Mammary epithelial cell (primary cell): ENCODE measurements at regions of chr19 and their contacts with region 1.

Region 1: GRCh38 chr19:48398375-48399235 is 5.1 kb downstream of the GRIN2D start:
- DNase-seq: peak; percentile 42
- H3K4me3 ChIP-seq: peak overlapping the region; percentile 17 to 56 (median 54)
- H3K27ac ChIP-seq: no peak overlapping the region
- H3K4me1 ChIP-seq: peaks cover 19% of the 10 kb centered on the region
- H3K27me3 ChIP-seq: peaks cover 10% of the 10 kb centered on the region
- CTCF ChIP-seq: no peak

Region 2: GRCh38 chr19:48255376-48256303 is 143.0 kb before region 1 on chr19 and contains the start of gene CARD8:
- CTCF ChIA-PET with region 1: no interaction called
- dilution Hi-C with region 1: no loop called
- in situ Hi-C with region 1: no loop called
- intact Hi-C with region 1: no loop called
- DNase-seq: peak; percentile 86
- H3K4me3 ChIP-seq: peak within 1 kb of the TSS; percentile 56 to 86 (median 77)
- H3K27ac ChIP-seq: peak within 1 kb of the TSS; percentile 97
- H3K4me1 ChIP-seq: peaks cover 4% of the 10 kb centered on the region
- H3K27me3 ChIP-seq: no peaks in the 10 kb centered on the region
- CTCF ChIP-seq: no peak
- total RNA-seq, gene CARD8: 10.5 to 14.2 TPM

Region 3: GRCh38 chr19:48492925-48493717 is 94.5 kb after region 1 on chr19:
- CTCF ChIA-PET with region 1: no interaction called
- dilution Hi-C with region 1: no loop called
- in situ Hi-C with region 1: no loop called
- intact Hi-C with region 1: loop called (anchors 2 kb)
- DNase-seq: peak; percentile 97
- H3K4me3 ChIP-seq: peak overlapping the region; percentile 46 to 86 (median 76)
- H3K27ac ChIP-seq: peak overlapping the region; percentile 47
- H3K4me1 ChIP-seq: peaks cover 23% of the 10 kb centered on the region
- H3K27me3 ChIP-seq: peaks cover 3% of the 10 kb centered on the region
- CTCF ChIP-seq: no peak